Activated CD8-positive, alpha-beta T cell treated with anti-CD3 and anti-CD28 coated beads for 36 hours (primary cell): ENCODE measurements at regions of chr2 and their contacts with region 1.

Region 1: GRCh38 chr2:186641807-186642321 is 52.0 kb upstream of the FAM171B start:
- DNase-seq: peak; percentile 49
- ATAC-seq: peak; percentile 78
- H3K4me3 Mint-ChIP-seq: no peak overlapping the region
- H3K27ac Mint-ChIP-seq: no peak overlapping the region
- H3K4me1 Mint-ChIP-seq: peaks cover 25% of the 10 kb centered on the region
- H3K27me3 Mint-ChIP-seq: no peaks in the 10 kb centered on the region
- CTCF ChIP-seq: peak; percentile 67

Region 2: DNA sequence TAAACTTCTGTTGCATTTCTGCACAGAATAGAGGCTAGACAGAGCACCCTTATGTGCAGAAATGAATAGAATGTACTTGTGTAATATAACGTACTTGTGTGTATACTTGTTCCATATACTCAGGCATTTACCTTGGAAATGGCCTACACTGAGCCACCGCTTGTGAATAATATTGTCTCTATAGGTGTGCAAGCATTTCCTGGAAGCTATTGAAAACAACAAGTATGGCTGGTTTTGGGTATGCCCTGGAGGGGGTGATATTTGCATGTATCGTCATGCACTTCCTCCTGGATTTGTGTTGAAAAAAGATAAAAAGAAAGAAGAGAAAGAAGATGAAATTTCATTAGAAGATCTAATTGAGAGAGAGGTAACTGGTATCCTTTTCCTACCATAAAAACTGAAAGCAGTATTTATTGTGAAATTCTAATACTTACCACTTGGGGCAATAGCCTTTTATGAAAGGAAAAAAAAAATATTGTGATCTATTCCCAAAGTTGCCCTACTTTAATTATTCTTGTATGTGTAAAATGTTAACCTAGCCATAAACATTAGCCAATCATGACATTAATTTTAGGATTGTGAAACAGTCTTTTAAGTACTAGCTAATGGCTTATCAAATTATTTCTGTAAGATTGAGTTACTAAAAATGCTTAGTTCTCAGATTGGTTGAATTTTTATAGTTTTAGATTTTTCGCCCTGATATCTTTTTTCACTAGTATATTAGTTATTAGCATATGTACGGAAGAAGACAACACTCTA is 137.8 kb before region 1 on chr2:
- CTCF ChIA-PET with region 1: interaction called, 83 read pairs
- POLR2A ChIA-PET with region 1: no interaction called
- intact Hi-C with region 1: loop called (anchors 2 kb)
- DNase-seq: no peak
- ATAC-seq: peak; percentile 39
- H3K4me3 Mint-ChIP-seq: no peak overlapping the region
- H3K27ac Mint-ChIP-seq: peak overlapping the region; percentile 65
- H3K4me1 Mint-ChIP-seq: peaks cover 24% of the 10 kb centered on the region
- H3K27me3 Mint-ChIP-seq: no peaks in the 10 kb centered on the region
- CTCF ChIP-seq: peak; percentile 71

Region 3: DNA sequence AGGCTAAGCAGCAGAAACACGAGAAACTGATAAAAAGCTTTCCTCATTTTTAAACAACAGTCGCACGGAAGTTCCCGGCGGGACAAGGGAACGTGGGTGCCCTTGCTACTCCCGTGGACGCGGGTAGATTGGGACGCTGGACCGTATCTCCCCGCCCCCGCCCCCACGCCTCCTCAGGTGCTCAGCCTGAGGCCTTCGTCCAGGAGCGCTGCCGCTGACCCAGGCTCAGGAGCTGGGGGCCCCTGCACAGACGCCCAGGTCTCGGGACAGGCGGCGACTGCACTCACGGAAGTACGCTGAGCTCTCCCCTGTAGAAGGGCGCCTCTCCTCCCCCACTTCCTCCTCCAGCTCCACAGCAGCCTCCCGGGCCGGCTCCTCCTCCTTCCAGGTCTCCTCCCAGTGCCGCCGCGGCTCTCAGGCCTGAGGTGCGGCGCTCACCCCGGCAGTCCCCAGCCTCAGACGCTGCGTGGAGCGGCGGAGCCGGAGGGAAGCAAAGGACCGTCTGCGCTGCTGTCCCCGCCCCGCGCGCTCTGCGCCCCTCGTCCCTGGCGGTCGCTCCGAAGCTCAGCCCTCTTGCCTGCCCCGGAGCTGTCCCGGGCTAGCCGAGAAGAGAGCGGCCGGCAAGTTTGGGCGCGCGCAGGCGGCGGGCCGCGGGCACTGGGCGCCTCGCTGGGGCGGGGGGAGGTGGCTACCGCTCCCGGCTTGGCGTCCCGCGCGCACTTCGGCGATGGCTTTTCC is 52.1 kb before region 1 on chr2 and contains the start of gene ITGAV:
- CTCF ChIA-PET with region 1: interaction called, 5 read pairs
- POLR2A ChIA-PET with region 1: interaction called, 8 read pairs
- intact Hi-C with region 1: loop called (anchors 5 kb)
- DNase-seq: peak; percentile 88
- ATAC-seq: peak; percentile 95
- H3K4me3 Mint-ChIP-seq: peak within 1 kb of the TSS; percentile 82
- H3K27ac Mint-ChIP-seq: peak within 1 kb of the TSS; percentile 83
- H3K4me1 Mint-ChIP-seq: peaks cover 31% of the 10 kb centered on the region
- H3K27me3 Mint-ChIP-seq: no peaks in the 10 kb centered on the region
- CTCF ChIP-seq: no peak
- total RNA-seq, gene ITGAV: 4.7 to 7.5 TPM

Region 4: GRCh38 chr2:186709529-186710450 is 67.9 kb after region 1 on chr2:
- CTCF ChIA-PET with region 1: no interaction called
- POLR2A ChIA-PET with region 1: no interaction called
- intact Hi-C with region 1: no loop called
- DNase-seq: no peak
- ATAC-seq: no peak
- H3K4me3 Mint-ChIP-seq: no peak overlapping the region
- H3K27ac Mint-ChIP-seq: no peak overlapping the region
- H3K4me1 Mint-ChIP-seq: no peaks in the 10 kb centered on the region
- H3K27me3 Mint-ChIP-seq: peaks cover 4% of the 10 kb centered on the region
- CTCF ChIP-seq: no peak

Region 5: DNA sequence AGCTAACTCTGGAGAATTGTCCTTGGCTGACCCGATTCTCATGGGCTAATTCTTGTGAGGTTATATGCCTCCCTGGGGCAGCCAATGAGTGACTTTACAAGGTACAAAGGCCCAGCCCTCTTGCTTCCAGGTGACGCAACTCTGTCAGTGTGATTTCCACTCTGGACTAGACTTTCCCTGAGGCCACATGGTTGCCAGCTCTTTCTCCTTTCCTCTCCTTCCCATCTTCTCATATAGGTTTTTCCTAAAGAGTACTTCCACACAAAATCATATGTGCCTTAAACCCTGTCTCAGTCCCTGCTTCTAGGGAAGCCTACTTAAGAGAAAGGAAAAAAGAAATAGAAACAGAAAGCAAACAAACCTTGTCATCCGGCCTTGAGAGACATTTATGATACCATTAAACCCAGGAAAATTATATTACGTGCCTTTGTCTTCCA is 433.4 kb after region 1 on chr2:
- CTCF ChIA-PET with region 1: no interaction called
- POLR2A ChIA-PET with region 1: no interaction called
- intact Hi-C with region 1: no loop called
- DNase-seq: no peak
- ATAC-seq: no peak
- H3K4me3 Mint-ChIP-seq: no peak overlapping the region
- H3K27ac Mint-ChIP-seq: no peak overlapping the region
- H3K4me1 Mint-ChIP-seq: no peaks in the 10 kb centered on the region
- H3K27me3 Mint-ChIP-seq: no peaks in the 10 kb centered on the region
- CTCF ChIP-seq: no peak